WTC11 (cell line): ENCODE measurements at regions of chr17 and their contacts with region 1.

Region 1: GRCh38 chr17:6496116-6496481 is 51.8 kb downstream of the PIMREG start:
- DNase-seq: peak; percentile 77
- ATAC-seq: peak; percentile 95
- H3K4me3 Mint-ChIP-seq: peak overlapping the region; percentile 62
- H3K27ac Mint-ChIP-seq: peak overlapping the region; percentile 74
- H3K4me1 Mint-ChIP-seq: peaks cover 49% of the 10 kb centered on the region
- H3K27me3 Mint-ChIP-seq: peaks cover 6% of the 10 kb centered on the region
- CTCF ChIP-seq: no peak

Region 2: DNA sequence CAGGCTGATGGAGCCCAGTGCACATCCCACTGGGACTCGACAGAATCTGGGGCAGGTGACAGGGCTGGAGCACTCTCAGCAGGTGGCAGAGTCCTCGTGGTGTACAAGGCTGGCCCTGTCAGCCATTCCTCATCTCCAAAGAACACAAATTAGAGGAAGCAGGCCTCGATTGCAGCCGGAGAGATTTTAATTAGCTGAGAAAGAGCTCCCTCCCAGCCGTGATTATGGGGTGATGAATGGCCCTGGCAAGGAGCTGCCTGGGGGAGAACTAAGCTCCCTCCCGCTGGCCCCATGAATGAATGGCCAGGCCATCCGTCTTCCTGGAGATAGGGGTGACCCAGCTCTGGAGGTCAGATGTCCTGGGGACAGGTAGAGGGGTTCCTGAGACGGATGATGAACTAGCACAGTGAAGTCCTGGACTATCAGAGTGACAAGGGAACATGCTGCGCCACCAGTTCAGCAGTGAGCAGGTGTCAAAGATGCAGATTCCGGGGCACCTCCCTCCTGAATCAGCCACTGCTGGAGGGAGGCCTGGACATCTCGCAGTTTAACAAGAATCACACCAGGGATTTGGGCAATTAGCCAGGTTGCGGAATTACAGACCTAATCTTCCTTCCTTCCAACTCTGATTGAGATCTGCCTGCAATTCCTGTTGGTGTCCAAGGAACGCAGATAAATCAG is 16.3 kb before region 1 on chr17:
- CTCF ChIA-PET with region 1: interaction called, 10 read pairs
- POLR2A ChIA-PET with region 1: no interaction called
- DNase-seq: no peak
- ATAC-seq: peak; percentile 12; the same call in 1 of the 2 replicates
- H3K4me3 Mint-ChIP-seq: no peak overlapping the region
- H3K27ac Mint-ChIP-seq: no peak overlapping the region
- H3K4me1 Mint-ChIP-seq: peaks cover 11% of the 10 kb centered on the region
- H3K27me3 Mint-ChIP-seq: no peaks in the 10 kb centered on the region
- CTCF ChIP-seq: no peak

Region 3: GRCh38 chr17:6548578-6549330 is 52.7 kb after region 1 on chr17:
- CTCF ChIA-PET with region 1: interaction called, 16 read pairs
- POLR2A ChIA-PET with region 1: no interaction called
- DNase-seq: no peak
- ATAC-seq: no peak
- H3K4me3 Mint-ChIP-seq: no peak overlapping the region
- H3K27ac Mint-ChIP-seq: no peak overlapping the region; the same call in 1 of the 2 replicates
- H3K4me1 Mint-ChIP-seq: peaks cover 40% of the 10 kb centered on the region
- H3K27me3 Mint-ChIP-seq: peaks cover 13% of the 10 kb centered on the region
- CTCF ChIP-seq: no peak